ENCODE measurements at regions of chr12 and their contacts with region 1.

Region 1: GRCh38 chr12:50074936-50075807 is 10.0 kb upstream of the SMARCD1 start:
- DNase-seq: peak; percentile 82
- ATAC-seq: peak; percentile 93
- H3K4me3 ChIP-seq: peak overlapping the region; percentile 15 to 63 (median 38); a peak in 5 of 6 replicates
- H3K27ac ChIP-seq: peak overlapping the region; percentile 61
- H3K4me1 ChIP-seq: peaks cover 48% of the 10 kb centered on the region
- H3K27me3 ChIP-seq: peaks cover 1 to 7% of the 10 kb centered on the region in 2 experiments; a peak in 3 of 5 replicates
- CTCF ChIP-seq: peak; percentile 100
- EP300 ChIP-seq: no peak
- POLR2A ChIP-seq: peak in 1 of 2 experiments; percentile 28; a peak in 1 of 4 replicates
- RAD21 ChIP-seq: peak; percentile 99

Region 2: DNA sequence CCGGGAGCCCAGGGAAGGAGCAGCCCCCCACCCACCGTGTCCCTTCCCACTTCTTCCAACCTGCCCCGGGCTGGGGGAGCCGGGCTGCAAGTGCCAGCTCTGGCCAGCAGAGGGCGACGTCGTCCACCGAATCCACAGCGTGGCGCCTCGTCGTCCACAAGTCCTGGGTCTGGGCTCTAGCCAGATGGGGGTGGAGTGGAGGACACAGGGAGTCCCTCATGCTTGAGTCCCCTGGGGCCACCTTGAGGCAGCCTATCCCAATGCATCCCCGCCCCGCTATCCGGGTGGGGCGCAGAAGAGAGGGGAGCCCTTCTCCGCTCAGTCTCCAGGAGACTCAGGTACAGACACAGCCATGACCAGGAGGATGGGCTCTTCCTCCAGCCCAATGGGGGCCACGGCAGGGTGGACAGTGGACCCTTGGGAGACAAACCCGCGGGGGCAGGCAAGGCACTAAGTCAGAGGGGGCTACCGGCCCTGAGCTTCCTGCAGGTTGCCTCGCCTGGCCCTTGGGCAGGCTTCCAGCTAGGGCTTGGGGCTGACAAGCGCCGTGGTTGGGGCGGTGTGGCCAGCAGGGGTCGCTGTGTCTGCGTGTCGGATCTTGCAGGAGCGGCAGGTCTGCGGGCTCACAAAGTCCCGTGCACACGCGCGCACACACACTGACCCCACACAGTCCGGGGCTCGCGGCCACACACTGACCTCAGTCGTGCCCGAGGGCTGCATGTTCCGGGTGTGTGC is 108.0 kb before region 1 on chr12:
- CTCF ChIA-PET with region 1: interaction called, 43 read pairs
- POLR2A ChIA-PET with region 1: no interaction called
- in situ Hi-C with region 1: no loop called
- intact Hi-C with region 1: loop called (anchors 1 kb)
- DNase-seq: peak; percentile 71
- ATAC-seq: peak; percentile 79
- H3K4me3 ChIP-seq: peak overlapping the region; percentile 33 to 69 (median 40); a peak in 5 of 6 replicates
- H3K27ac ChIP-seq: no peak overlapping the region
- H3K4me1 ChIP-seq: peaks cover 54% of the 10 kb centered on the region
- H3K27me3 ChIP-seq: peaks cover 5 to 65% of the 10 kb centered on the region in 2 experiments
- CTCF ChIP-seq: peak; percentile 91
- EP300 ChIP-seq: no peak
- POLR2A ChIP-seq: no peak
- RAD21 ChIP-seq: peak; percentile 91

Region 3: GRCh38 chr12:50016501-50017475 is 58.4 kb before region 1 on chr12:
- CTCF ChIA-PET with region 1: no interaction called
- POLR2A ChIA-PET with region 1: no interaction called
- in situ Hi-C with region 1: no loop called
- intact Hi-C with region 1: no loop called
- DNase-seq: no peak
- ATAC-seq: no peak; the same call in 2 of the 3 replicates
- H3K4me3 ChIP-seq: no peak overlapping the region
- H3K27ac ChIP-seq: peak overlapping the region; percentile 21
- H3K4me1 ChIP-seq: peaks cover 39% of the 10 kb centered on the region
- H3K27me3 ChIP-seq: no peaks in the 10 kb centered on the region
- CTCF ChIP-seq: no peak
- EP300 ChIP-seq: no peak
- POLR2A ChIP-seq: no peak
- RAD21 ChIP-seq: no peak

Region 4: DNA sequence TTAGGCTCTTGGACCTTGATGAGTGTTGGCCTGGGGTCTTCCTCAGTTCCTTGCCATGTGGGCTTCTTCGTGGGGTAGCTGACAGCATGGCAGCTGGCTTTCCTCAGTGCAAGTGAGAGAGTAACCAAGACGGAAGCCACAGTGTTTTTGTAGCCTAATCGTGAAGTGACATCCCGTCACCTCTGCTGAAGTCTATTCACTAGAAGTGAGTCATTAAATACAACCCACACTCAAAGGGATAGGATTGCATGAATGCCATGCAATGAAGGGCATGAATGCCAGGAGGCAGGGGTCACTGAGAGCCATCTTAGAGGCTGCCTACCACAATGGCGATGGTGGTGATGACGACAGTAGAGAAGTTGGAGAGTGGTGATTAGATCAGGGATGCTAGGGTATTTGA is 31.3 kb before region 1 on chr12:
- CTCF ChIA-PET with region 1: interaction called, 18 read pairs
- POLR2A ChIA-PET with region 1: interaction called, 5 read pairs
- in situ Hi-C with region 1: no loop called
- intact Hi-C with region 1: loop called (anchors 1 kb)
- DNase-seq: no peak
- ATAC-seq: no peak
- H3K4me3 ChIP-seq: no peak overlapping the region
- H3K27ac ChIP-seq: no peak overlapping the region
- H3K4me1 ChIP-seq: peaks cover 9% of the 10 kb centered on the region; the same call in 1 of the 2 replicates
- H3K27me3 ChIP-seq: peaks cover 7 to 31% of the 10 kb centered on the region in 2 experiments; a peak in 4 of 5 replicates
- CTCF ChIP-seq: no peak
- EP300 ChIP-seq: no peak
- POLR2A ChIP-seq: no peak
- RAD21 ChIP-seq: no peak

Region 5: GRCh38 chr12:50132505-50133135 is 57.4 kb after region 1 on chr12:
- CTCF ChIA-PET with region 1: interaction called, 12 read pairs
- POLR2A ChIA-PET with region 1: no interaction called
- in situ Hi-C with region 1: no loop called
- intact Hi-C with region 1: loop called (anchors 1 kb)
- DNase-seq: peak; percentile 48
- ATAC-seq: peak; percentile 74
- H3K4me3 ChIP-seq: no peak overlapping the region
- H3K27ac ChIP-seq: no peak overlapping the region
- H3K4me1 ChIP-seq: no peaks in the 10 kb centered on the region
- H3K27me3 ChIP-seq: no peaks in the 10 kb centered on the region
- CTCF ChIP-seq: peak; percentile 72
- EP300 ChIP-seq: no peak
- POLR2A ChIP-seq: no peak
- RAD21 ChIP-seq: peak; percentile 44; the same call in 1 of the 2 replicates

Region 6: DNA sequence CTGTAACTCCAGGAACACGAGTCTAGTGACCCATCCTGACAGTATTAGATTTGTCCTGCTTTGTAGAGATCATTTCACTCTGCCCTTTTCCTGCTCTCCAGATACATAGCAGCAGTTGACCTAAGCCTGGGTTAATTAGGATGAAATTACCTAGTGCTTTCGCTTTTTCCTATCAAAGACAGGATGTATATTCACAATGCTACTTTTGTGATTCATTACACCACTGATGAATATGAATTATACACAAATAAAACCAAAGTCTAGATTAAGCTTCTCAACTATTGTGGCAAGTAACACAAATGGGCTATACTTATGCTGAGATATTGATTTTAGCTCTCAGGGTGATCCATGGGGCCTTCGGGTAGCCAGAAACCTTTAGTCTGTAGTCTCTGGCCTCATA is 74.1 kb after region 1 on chr12:
- CTCF ChIA-PET with region 1: no interaction called
- POLR2A ChIA-PET with region 1: no interaction called
- in situ Hi-C with region 1: no loop called
- intact Hi-C with region 1: no loop called
- DNase-seq: no peak
- ATAC-seq: no peak
- H3K4me3 ChIP-seq: no peak overlapping the region
- H3K27ac ChIP-seq: no peak overlapping the region
- H3K4me1 ChIP-seq: no peaks in the 10 kb centered on the region
- H3K27me3 ChIP-seq: no peaks in the 10 kb centered on the region
- CTCF ChIP-seq: no peak
- EP300 ChIP-seq: no peak
- POLR2A ChIP-seq: no peak
- RAD21 ChIP-seq: no peak

Region 7: DNA sequence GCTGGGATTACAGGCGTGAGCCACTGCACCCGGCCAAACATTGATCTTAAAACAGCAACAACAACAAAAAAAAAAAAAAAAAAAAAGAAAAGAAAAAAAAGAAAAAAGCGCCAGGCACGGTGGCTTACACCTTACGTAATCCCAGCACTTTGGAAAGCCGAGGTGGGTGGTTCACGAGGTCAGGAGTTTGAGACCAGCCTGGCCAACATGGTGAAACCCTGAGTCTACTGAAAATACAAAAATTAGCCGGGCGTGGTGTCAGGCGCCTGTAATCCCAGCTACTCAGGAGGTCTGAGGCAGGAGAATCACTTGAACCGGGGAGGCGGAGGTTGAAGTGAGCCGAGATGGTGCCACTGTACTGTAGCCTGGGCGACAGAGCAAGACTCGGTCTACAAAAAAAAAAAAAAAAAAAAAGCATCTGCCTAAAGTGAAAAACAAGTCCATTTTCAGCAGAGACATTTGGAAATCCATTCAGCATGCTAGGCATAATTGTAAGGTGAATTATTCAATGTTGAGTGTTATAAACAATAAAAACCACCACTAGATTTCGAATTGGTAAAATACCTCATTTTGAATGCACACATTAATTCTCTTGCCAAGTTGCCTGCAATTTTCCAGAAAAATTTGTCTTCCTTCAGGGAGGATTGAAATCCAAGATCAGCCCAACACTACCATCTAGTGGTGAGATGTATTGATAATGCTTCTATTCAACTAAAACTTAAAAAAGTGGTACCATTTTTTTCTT is 100.0 kb after region 1 on chr12:
- CTCF ChIA-PET with region 1: interaction called, 25 read pairs
- POLR2A ChIA-PET with region 1: interaction called, 3 read pairs
- in situ Hi-C with region 1: loop called (anchors 5 kb)
- intact Hi-C with region 1: loop called (anchors 1 kb)
- DNase-seq: peak; percentile 62
- ATAC-seq: no peak
- H3K4me3 ChIP-seq: no peak overlapping the region
- H3K27ac ChIP-seq: no peak overlapping the region
- H3K4me1 ChIP-seq: peaks cover 6% of the 10 kb centered on the region
- H3K27me3 ChIP-seq: no peaks in the 10 kb centered on the region
- CTCF ChIP-seq: peak; percentile 71
- EP300 ChIP-seq: no peak
- POLR2A ChIP-seq: no peak
- RAD21 ChIP-seq: peak; percentile 62; the same call in 1 of the 2 replicates

Region 8: DNA sequence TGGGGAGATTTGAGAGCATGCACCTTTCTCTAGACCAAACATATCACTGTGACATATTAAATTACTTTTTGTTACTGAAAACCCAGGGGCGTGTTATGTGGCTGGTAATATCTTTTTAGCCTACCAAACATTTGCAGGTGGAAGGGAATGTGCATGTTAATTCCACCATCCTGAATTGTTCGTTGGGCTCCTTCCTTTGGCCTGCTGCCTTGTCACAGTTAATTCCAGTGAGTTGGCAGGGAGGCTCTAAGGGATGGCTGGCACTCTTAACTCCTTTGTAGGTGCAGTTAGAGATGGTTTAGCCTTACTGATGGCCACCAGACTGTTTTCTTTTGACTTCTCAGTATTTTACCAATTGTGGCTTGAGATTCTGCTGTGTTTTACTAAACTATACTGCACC is 494.1 kb after region 1 on chr12:
- CTCF ChIA-PET with region 1: no interaction called
- POLR2A ChIA-PET with region 1: no interaction called
- in situ Hi-C with region 1: no loop called
- intact Hi-C with region 1: no loop called
- DNase-seq: no peak
- ATAC-seq: no peak
- H3K4me3 ChIP-seq: no peak overlapping the region
- H3K27ac ChIP-seq: peak overlapping the region; percentile 50
- H3K4me1 ChIP-seq: peaks cover 89% of the 10 kb centered on the region
- H3K27me3 ChIP-seq: no peaks in the 10 kb centered on the region; a peak in 1 of 5 replicates
- CTCF ChIP-seq: no peak
- EP300 ChIP-seq: no peak
- POLR2A ChIP-seq: no peak
- RAD21 ChIP-seq: no peak